ENCODE measurements at regions of chr1 and their contacts with region 1.

Region 1: DNA sequence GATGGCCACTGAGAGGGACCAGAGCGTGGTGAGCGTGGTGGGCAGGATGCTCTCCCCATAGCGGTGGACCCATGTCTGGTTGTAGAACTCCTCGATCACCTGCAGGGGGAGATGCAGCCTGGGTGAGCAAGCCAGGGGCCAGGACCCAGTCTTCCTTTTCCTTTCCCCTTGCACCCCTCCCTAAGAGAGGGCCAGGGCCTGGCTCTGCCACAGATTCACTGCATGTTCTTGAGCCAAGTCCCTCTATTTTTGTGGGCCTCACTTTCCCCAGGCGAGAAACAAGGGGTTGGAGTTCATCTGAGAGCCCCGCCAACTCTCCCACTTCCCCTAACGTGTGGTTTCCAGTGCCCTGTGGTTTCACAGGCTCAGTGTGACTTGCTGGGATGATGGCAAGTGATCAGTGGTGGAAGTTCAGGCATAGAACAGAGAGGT is 27.5 kb downstream of the SLC2A1 start:
- DNase-seq: peak; percentile 70
- H3K4me3 Mint-ChIP-seq: peak overlapping the region; percentile 35
- H3K27ac Mint-ChIP-seq: peak overlapping the region; percentile 98
- H3K4me1 Mint-ChIP-seq: peaks cover 61% of the 10 kb centered on the region
- H3K27me3 Mint-ChIP-seq: no peaks in the 10 kb centered on the region

Region 2: DNA sequence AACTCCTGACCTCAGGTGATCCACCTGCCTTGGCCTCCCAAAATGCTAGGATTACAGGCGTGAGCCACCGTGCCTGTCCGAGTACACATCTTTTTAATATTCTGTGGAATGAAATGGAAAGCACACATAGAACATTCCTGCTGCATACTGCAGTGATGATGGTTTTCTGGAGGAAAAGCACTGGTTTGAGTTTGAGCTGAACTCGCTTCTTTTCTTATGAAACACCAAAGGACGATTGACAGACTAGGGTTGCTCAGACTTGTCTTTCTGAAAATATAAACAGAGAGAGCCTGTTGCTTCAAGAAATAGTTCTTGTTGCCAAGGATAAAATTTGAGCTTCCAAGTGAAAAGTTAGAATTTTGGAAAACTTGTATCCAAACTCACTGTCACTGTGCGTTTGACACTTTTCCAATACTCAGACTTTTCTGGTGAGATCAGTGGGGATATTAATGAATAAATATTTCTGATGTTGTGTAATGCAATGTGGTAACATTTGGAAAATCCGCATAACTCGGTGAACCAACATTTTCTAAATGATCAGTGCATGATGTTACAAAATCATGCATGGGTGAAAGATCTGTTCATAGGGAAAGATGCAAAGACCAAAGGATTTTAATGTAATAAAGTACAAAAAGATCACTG is 129.2 kb before region 1 on chr1:
- CTCF ChIA-PET with region 1: no interaction called
- POLR2A ChIA-PET with region 1: no interaction called
- intact Hi-C with region 1: no loop called
- DNase-seq: no peak
- H3K4me3 Mint-ChIP-seq: no peak overlapping the region
- H3K27ac Mint-ChIP-seq: no peak overlapping the region
- H3K4me1 Mint-ChIP-seq: no peaks in the 10 kb centered on the region
- H3K27me3 Mint-ChIP-seq: no peaks in the 10 kb centered on the region

Region 3: DNA sequence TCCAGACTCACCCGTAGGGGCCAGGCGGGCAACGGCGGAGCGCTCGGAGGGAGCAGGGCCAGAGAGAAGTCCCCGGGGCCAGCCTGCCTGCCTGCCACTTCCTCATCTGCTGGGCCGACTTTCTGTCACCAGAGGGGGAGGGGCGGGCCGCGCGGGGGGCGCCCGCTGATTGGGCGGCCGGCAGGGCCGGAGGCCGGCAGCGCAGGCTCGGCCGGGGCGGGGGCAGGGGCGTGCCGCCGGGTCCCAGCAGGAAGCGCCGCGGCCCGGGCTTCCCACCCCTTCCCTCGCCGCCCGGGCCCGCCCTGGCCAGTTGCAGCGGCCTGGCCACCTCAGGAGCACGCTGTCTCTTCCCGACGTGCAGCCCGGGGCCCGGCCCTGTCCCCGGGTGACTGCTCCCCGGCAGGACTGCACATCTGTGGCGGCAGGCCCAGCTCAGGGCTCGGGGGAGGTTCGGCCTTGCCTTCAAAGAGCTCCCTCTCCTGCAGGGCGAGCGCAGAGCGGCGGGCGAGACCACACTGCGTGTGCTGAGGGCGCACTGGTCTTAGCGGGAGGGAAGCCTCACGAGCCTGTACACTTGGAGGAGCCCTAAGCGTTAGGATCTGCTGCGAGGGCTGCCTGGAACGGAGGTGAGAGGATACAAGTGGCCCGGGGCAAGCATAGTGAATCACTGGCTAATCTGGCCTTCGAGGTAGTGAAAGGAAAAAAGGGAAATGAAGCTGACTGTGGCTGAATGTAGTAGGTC is 437.0 kb after region 1 on chr1 and contains the start of gene ELOVL1:
- CTCF ChIA-PET with region 1: no interaction called
- POLR2A ChIA-PET with region 1: no interaction called
- intact Hi-C with region 1: loop called (anchors 10 kb)
- DNase-seq: peak; percentile 94
- H3K4me3 Mint-ChIP-seq: peak within 1 kb of the TSS; percentile 93
- H3K27ac Mint-ChIP-seq: peak within 1 kb of the TSS; percentile 91
- H3K4me1 Mint-ChIP-seq: peaks cover 29% of the 10 kb centered on the region
- H3K27me3 Mint-ChIP-seq: no peaks in the 10 kb centered on the region
- total RNA-seq, gene ELOVL1: 63.4 to 64.7 TPM